ENCODE measurements at regions of chr11 and their contacts with region 1.

Region 1: DNA sequence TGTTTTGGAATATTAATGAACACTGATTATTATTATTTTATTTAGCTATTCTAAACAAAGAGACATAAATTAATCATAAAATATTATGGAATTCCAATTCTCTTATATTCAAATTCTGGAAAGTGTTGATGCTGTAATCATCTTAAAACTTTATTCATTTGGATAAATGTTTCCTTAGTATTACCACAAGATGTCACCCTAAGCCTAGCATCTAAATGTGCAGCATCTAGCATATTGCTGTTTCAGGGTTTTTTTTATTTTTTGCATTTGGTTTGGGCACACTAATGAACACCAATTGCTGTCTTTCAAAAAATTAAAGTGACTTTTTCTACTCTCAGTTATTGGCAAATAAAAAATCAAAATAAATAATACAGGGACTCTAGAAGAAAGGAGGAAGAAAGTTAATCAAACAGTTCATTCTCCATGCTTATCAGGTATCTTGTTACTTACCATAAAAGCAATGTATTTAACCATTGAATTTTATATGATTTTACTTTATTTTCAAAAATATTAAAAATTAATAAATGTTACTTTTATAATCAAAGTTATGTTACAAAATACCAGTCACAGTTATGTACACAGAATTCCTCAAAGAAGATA is 31.8 kb downstream of the DLG2 start:
- DNase-seq: peak; percentile 8
- H3K4me3 ChIP-seq: no peak overlapping the region
- H3K27ac ChIP-seq: no peak overlapping the region
- H3K4me1 ChIP-seq: no peaks in the 10 kb centered on the region
- H3K27me3 ChIP-seq: no peaks in the 10 kb centered on the region
- CTCF ChIP-seq: peak; percentile 34 to 59

Region 2: DNA sequence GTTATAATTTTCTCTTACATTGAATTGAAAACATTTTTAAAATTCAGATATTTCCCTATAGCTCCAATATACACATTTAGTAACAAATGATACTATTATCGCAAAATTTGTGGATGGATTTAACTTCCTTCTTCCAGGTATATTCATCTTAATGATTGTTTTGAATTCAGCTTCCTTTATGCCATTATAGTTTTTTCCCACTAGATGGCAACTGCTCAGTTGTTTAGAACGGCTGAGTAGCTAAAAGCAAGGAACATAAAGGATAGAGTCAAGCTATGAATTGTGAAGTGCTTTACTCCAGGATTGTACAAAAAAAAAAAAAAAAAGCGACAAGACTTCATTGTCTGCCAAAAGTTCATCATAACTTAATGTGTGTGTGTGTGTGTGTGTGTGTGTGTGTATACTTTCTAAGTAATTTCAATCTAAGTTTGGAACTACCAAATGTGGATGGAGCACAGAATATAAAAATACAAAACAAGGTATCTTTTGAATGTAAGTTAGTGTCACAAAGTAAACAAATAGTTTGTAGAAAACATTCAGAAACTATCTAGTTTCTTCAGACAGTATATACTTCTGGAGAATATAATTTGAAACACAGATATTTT is 814.6 kb before region 1 on chr11:
- CTCF ChIA-PET with region 1: interaction called, 3 read pairs
- dilution Hi-C with region 1: no loop called
- in situ Hi-C with region 1: loop called in 1 of 2 experiments (anchors 25 kb)
- intact Hi-C with region 1: loop called (anchors 1 kb)
- DNase-seq: peak; percentile 14
- H3K4me3 ChIP-seq: no peak overlapping the region
- H3K27ac ChIP-seq: no peak overlapping the region
- H3K4me1 ChIP-seq: no peaks in the 10 kb centered on the region
- H3K27me3 ChIP-seq: no peaks in the 10 kb centered on the region
- CTCF ChIP-seq: peak; percentile 42 to 65

Region 3: DNA sequence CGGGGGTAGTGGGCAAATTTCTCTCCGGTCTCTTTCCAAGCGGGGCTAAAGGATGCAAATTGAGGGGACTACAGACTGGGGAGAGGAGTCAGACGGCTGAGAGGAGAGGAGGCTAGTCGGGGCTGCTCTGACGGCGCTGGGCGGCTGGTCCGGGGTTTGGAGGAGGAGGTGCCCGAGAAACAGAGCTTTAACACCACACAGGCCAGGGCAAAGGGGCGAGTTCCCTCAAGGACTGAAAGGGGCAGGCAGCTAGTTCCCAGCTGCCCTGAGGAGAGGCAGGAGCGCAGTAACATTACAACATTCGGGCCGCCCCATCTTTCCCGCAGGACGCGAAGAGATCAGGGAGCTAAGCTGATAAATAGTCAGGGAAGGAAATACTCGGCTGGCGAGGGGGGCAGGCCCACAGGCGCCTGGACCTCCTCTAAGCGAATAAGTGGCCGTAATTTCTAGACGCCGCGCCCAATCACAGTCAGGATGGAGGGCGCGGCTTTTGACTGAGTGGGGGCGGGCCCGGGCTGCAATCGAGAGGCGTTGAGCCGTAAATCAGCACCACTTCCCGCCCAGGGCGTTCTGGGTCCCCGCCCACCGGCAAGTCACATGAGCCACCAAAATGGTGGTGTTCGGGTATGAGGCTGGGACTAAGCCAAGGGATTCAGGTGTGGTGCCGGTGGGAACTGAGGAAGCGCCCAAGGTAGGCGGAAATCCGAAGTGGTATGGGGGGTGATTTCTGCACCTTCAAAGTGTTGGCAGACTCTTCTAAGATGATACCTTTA is 32.8 kb after region 1 on chr11 and contains the start of gene TMEM126B:
- CTCF ChIA-PET with region 1: no interaction called
- dilution Hi-C with region 1: no loop called
- in situ Hi-C with region 1: no loop called
- intact Hi-C with region 1: loop called (anchors 2 kb)
- DNase-seq: peak; percentile 98
- H3K4me3 ChIP-seq: peak within 1 kb of the TSS; percentile 66 to 91 (median 79)
- H3K27ac ChIP-seq: peak within 1 kb of the TSS; percentile 67
- H3K4me1 ChIP-seq: peaks cover 21% of the 10 kb centered on the region
- H3K27me3 ChIP-seq: no peaks in the 10 kb centered on the region
- CTCF ChIP-seq: no peak
- total RNA-seq, gene TMEM126B: 36.0 to 46.1 TPM

Region 4: GRCh38 chr11:85826116-85826855 is 230.9 kb after region 1 on chr11:
- CTCF ChIA-PET with region 1: no interaction called
- dilution Hi-C with region 1: no loop called
- in situ Hi-C with region 1: no loop called
- intact Hi-C with region 1: loop called (anchors 2 kb)
- DNase-seq: peak; percentile 41
- H3K4me3 ChIP-seq: no peak overlapping the region
- H3K27ac ChIP-seq: no peak overlapping the region
- H3K4me1 ChIP-seq: peaks cover 31% of the 10 kb centered on the region
- H3K27me3 ChIP-seq: no peaks in the 10 kb centered on the region
- CTCF ChIP-seq: peak; percentile 69 to 73

Region 5: DNA sequence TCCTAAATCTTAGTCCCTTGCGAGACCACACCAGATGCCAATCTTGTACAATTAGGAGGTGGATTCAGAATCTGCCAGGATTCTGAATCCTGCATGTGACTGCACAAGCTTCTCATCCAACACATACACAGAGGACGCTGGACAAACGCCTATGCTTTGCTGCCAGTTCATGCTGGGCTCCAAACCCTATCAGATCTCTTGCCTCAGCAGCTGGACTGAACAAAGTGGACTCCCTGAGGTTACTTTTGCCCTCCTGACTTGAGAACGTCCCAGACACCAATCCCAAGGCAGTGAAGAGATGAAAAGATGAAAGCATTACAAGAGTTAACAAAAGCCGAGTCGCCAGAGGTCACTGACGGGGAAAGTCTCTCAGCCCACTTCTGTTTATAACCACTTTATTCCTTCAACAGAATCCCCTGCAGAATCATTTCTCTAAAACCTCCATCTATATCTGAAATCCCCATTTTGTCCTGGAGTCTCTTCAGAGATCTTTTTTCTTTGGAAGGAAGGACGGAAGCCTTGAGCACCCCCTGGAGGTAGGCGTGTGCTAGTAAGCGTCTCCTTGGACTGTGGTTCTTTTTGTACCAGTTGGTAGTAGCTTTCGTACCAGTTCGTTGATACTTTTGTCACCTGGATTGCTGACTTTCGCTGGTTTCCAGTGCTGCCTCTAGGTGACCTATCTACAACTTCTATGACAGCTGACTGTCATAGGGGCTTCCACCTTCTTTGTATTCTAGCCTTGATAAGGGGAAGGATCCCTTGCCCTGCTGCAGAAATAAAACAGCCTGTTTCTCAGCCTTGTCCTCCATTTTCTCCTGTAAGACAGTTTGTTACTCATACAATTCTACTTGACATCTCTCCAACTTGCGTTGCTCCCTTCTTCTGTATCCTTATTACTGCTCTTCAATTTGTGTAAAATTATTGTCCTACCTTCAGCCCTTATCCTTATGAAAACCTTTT is 623.0 kb after region 1 on chr11:
- CTCF ChIA-PET with region 1: no interaction called
- dilution Hi-C with region 1: no loop called
- in situ Hi-C with region 1: no loop called
- intact Hi-C with region 1: loop called (anchors 10 kb)
- DNase-seq: peak; percentile 55
- H3K4me3 ChIP-seq: peak overlapping the region in 1 of 3 experiments; percentile 4
- H3K27ac ChIP-seq: no peak overlapping the region
- H3K4me1 ChIP-seq: no peaks in the 10 kb centered on the region
- H3K27me3 ChIP-seq: no peaks in the 10 kb centered on the region
- CTCF ChIP-seq: peak; percentile 92 to 95

Measured in mammary epithelial cell (primary cell).